Heart left ventricle (tissue), 16 donors: ENCODE measurements at regions of chr6 and their contacts with region 1.

Region 1: GRCh38 chr6:42901536-42901957 is 14.3 kb upstream of the PTCRA start:
- DNase-seq: peak; percentile 82 to 91 (median 84)
- ATAC-seq: peak; percentile 94 to 99 (median 98)
- H3K4me3 ChIP-seq: peak overlapping the region in 2 of 12 donors; percentile 9 to 12
- H3K27ac ChIP-seq: peak overlapping the region in 10 of 12 donors; percentile 15 to 69 (median 48)
- H3K4me1 ChIP-seq: peaks cover 0 to 24% (median 6%) of the 10 kb centered on the region in 12 donors
- H3K27me3 ChIP-seq: no peaks in the 10 kb centered on the region
- CTCF ChIP-seq: peak; percentile 86 to 95 (median 90)
- POLR2A ChIP-seq: no peak

Region 2: GRCh38 chr6:42661540-42662153 is 239.9 kb before region 1 on chr6:
- intact Hi-C with region 1: loop called in 5 of 10 experiments (anchors 1 to 5 kb)
- DNase-seq: peak; percentile 67 to 82 (median 77)
- ATAC-seq: peak; percentile 64 to 85 (median 77)
- H3K4me3 ChIP-seq: no peak overlapping the region
- H3K27ac ChIP-seq: peak overlapping the region in 1 of 12 donors; percentile 10
- H3K4me1 ChIP-seq: peaks cover 0 to 5% (median 0%) of the 10 kb centered on the region in 12 donors
- H3K27me3 ChIP-seq: no peaks in the 10 kb centered on the region
- CTCF ChIP-seq: peak; percentile 80 to 97 (median 90)
- POLR2A ChIP-seq: no peak

Region 3: GRCh38 chr6:42845327-42845694 is 56.2 kb before region 1 on chr6:
- intact Hi-C with region 1: no loop called
- DNase-seq: no peak
- ATAC-seq: peak in 1 of 4 donors; percentile 20
- H3K4me3 ChIP-seq: no peak overlapping the region
- H3K27ac ChIP-seq: no peak overlapping the region
- H3K4me1 ChIP-seq: no peaks in the 10 kb centered on the region
- H3K27me3 ChIP-seq: no peaks in the 10 kb centered on the region
- CTCF ChIP-seq: no peak
- POLR2A ChIP-seq: no peak

Region 4: GRCh38 chr6:42984001-42984923 is 82.7 kb after region 1 on chr6 and contains the start of gene PPP2R5D:
- intact Hi-C with region 1: loop called in 2 of 10 experiments (anchors 10 kb)
- DNase-seq: peak; percentile 97 to 99 (median 98)
- ATAC-seq: peak; percentile 95 to 99 (median 98)
- H3K4me3 ChIP-seq: peak within 1 kb of the TSS; percentile 74 to 97 (median 86)
- H3K27ac ChIP-seq: peak within 1 kb of the TSS; percentile 60 to 93 (median 90)
- H3K4me1 ChIP-seq: peaks cover 3 to 61% (median 45%) of the 10 kb centered on the region in 12 donors
- H3K27me3 ChIP-seq: no peaks in the 10 kb centered on the region
- CTCF ChIP-seq: no peak
- POLR2A ChIP-seq: peak in 1 of 2 donors; percentile 93
- total RNA-seq, gene PPP2R5D: 30.9 to 51.3 (median 35.1) TPM

Region 5: GRCh38 chr6:43053545-43054205 is 152.1 kb after region 1 on chr6 and contains the start of gene CUL7:
- intact Hi-C with region 1: loop called in 2 of 10 experiments (anchors 5 to 10 kb)
- DNase-seq: peak; percentile 93 to 96 (median 96)
- ATAC-seq: peak; percentile 92 to 97 (median 96)
- H3K4me3 ChIP-seq: peak within 1 kb of the TSS; percentile 36 to 87 (median 74)
- H3K27ac ChIP-seq: peak within 1 kb of the TSS; percentile 81 to 97 (median 94)
- H3K4me1 ChIP-seq: peaks cover 0 to 34% (median 18%) of the 10 kb centered on the region in 12 donors
- H3K27me3 ChIP-seq: no peaks in the 10 kb centered on the region
- CTCF ChIP-seq: peak in 3 of 12 donors; percentile 3 to 12 (median 7)
- POLR2A ChIP-seq: peak in 1 of 2 donors; percentile 83
- total RNA-seq, gene CUL7: 5.6 to 13.2 (median 7.9) TPM

Region 6: GRCh38 chr6:43143235-43144124 is 241.9 kb after region 1 on chr6:
- intact Hi-C with region 1: loop called (anchors 1 to 5 kb)
- DNase-seq: peak; percentile 87 to 95 (median 90)
- ATAC-seq: peak; percentile 84 to 97 (median 96)
- H3K4me3 ChIP-seq: peak overlapping the region in 2 of 12 donors; percentile 12 to 32
- H3K27ac ChIP-seq: peak overlapping the region in 8 of 12 donors; percentile 2 to 70 (median 34)
- H3K4me1 ChIP-seq: peaks cover 0 to 17% (median 11%) of the 10 kb centered on the region in 12 donors
- H3K27me3 ChIP-seq: no peaks in the 10 kb centered on the region
- CTCF ChIP-seq: peak; percentile 86 to 98 (median 94)
- POLR2A ChIP-seq: no peak